ENCODE measurements at regions of chr19 and their contacts with region 1.

Region 1: GRCh38 chr19:33143897-33144405 is 12.0 kb downstream of the WDR88 start:
- DNase-seq: peak; percentile 69 to 74 (median 70)
- H3K4me3 ChIP-seq: peak overlapping the region; percentile 14 to 51 (median 17)
- H3K4me3 Mint-ChIP-seq: peak overlapping the region; percentile 72 to 84
- H3K27ac ChIP-seq: no peak overlapping the region
- H3K27ac Mint-ChIP-seq: peak overlapping the region in 4 of 7 donors; percentile 52 to 65 (median 56)
- H3K4me1 ChIP-seq: peaks cover 0 to 8% of the 10 kb centered on the region in 2 donors
- H3K4me1 Mint-ChIP-seq: peaks cover 7% of the 10 kb centered on the region
- H3K27me3 ChIP-seq: peaks cover 0 to 4% of the 10 kb centered on the region in 2 donors
- H3K27me3 Mint-ChIP-seq: peaks cover 2 to 6% (median 6%) of the 10 kb centered on the region in 3 donors
- CTCF ChIP-seq: peak; percentile 89

Region 2: GRCh38 chr19:33110137-33110910 is 33.6 kb before region 1 on chr19:
- intact Hi-C with region 1: no loop called
- DNase-seq: no peak
- H3K4me3 ChIP-seq: no peak overlapping the region
- H3K4me3 Mint-ChIP-seq: no peak overlapping the region
- H3K27ac ChIP-seq: no peak overlapping the region
- H3K27ac Mint-ChIP-seq: no peak overlapping the region
- H3K4me1 ChIP-seq: no peaks in the 10 kb centered on the region
- H3K4me1 Mint-ChIP-seq: no peaks in the 10 kb centered on the region
- H3K27me3 ChIP-seq: no peaks in the 10 kb centered on the region
- H3K27me3 Mint-ChIP-seq: peaks cover 0 to 2% (median 0%) of the 10 kb centered on the region in 3 donors
- CTCF ChIP-seq: no peak

Region 3: GRCh38 chr19:33186431-33187182 is 42.7 kb after region 1 on chr19:
- intact Hi-C with region 1: loop called (anchors 2 to 5 kb)
- DNase-seq: peak; percentile 29 to 75 (median 68)
- H3K4me3 ChIP-seq: peak overlapping the region in 2 of 3 experiments; percentile 17 to 74
- H3K4me3 Mint-ChIP-seq: peak overlapping the region; percentile 60 to 80
- H3K27ac ChIP-seq: peak overlapping the region; percentile 44 to 70
- H3K27ac Mint-ChIP-seq: peak overlapping the region; percentile 50 to 89 (median 83)
- H3K4me1 ChIP-seq: peaks cover 45 to 48% of the 10 kb centered on the region in 2 donors
- H3K4me1 Mint-ChIP-seq: peaks cover 51% of the 10 kb centered on the region
- H3K27me3 ChIP-seq: no peaks in the 10 kb centered on the region
- H3K27me3 Mint-ChIP-seq: no peaks in the 10 kb centered on the region
- CTCF ChIP-seq: no peak

Region 4: DNA sequence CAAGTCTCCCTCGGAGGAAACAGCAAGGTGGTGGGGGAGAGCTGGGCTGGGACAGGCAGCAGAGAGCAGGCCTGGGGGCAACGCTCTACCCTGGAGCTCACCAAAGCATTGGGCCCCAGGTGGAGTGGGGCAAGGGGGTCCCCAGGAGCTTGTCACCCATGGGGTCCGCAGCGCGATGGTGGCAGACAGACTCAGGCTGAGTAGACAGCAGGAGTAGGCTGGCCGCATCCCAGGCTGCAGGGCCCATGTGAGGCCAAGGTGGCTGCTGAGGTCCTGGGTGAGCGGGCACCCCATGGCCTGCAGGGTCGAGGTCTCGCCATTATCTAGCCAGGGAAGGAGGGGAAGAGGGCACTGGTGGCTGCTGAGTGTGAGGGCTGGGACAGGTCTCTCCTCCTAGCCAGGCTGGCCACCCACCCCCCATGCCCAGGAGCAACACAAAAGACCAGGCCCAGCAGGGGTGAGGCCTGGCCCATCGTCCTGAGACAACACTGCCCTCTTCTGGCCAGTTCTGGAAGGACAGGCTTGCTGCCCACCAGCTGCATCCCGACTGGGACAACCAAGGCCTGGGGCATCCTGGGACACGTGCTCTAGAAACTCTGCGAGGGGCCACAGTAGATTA is 262.7 kb after region 1 on chr19:
- intact Hi-C with region 1: loop called (anchors 10 kb)
- DNase-seq: peak; percentile 63 to 74 (median 69)
- H3K4me3 ChIP-seq: no peak overlapping the region
- H3K4me3 Mint-ChIP-seq: no peak overlapping the region
- H3K27ac ChIP-seq: no peak overlapping the region
- H3K27ac Mint-ChIP-seq: no peak overlapping the region
- H3K4me1 ChIP-seq: peaks cover 46 to 62% of the 10 kb centered on the region in 2 donors
- H3K4me1 Mint-ChIP-seq: peaks cover 46% of the 10 kb centered on the region
- H3K27me3 ChIP-seq: no peaks in the 10 kb centered on the region
- H3K27me3 Mint-ChIP-seq: peaks cover 0 to 6% (median 0%) of the 10 kb centered on the region in 3 donors
- CTCF ChIP-seq: peak; percentile 97

Measured in CD14-positive monocyte (primary cell).